CD4-positive, alpha-beta T cell (primary cell): ENCODE measurements at regions of chr3 and their contacts with region 1.

Region 1: DNA sequence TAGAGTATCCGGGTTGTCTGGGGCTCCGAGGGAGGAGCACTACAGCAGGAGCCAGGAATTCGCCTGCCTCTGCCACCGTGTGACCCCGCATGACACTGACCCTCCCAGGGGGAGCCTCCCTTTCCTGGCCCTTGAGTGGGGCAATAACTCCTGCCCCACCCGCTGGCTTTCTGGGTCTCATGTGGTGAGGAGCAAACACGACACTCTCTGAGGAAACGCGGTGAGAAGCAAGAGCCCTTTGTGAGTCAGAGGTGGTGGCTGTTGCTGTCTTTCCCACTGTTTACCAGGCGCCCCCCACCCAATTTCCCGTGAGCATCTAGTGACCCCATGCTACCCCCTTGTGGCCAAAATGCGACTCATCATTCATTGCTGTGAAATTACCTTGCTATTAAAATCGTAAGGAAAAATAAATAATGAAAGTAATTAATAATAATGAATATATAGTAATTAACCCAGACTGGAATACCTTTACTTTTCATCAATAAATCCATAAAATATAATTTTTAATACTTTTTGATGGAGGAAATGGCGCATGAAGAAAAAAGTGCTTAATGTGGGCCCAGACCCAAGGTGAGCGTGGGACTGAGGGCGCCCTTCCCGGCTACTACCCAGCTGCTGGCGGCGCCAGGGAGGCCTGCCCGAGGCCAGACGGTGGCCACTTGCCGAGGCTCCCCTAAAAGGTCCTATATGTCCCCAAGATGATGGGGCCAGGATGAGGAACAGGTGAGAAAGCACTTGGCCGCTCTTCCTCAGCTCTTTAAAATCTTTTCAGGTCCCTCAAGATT is 29.3 kb downstream of the CCNL1 start:
- DNase-seq: peak; percentile 57 to 94 (median 80)
- ATAC-seq: peak; percentile 69
- H3K4me3 ChIP-seq: peak overlapping the region; percentile 28
- H3K4me3 Mint-ChIP-seq: peak overlapping the region; percentile 80
- H3K27ac ChIP-seq: peak overlapping the region; percentile 80 to 92
- H3K27ac Mint-ChIP-seq: peak overlapping the region; percentile 98
- H3K4me1 ChIP-seq: peaks cover 80% of the 10 kb centered on the region
- H3K4me1 Mint-ChIP-seq: peaks cover 59% of the 10 kb centered on the region
- H3K27me3 ChIP-seq: no peaks in the 10 kb centered on the region
- H3K27me3 Mint-ChIP-seq: no peaks in the 10 kb centered on the region
- CTCF ChIP-seq: peak; percentile 87

Region 2: GRCh38 chr3:156519758-156520162 is 610.9 kb before region 1 on chr3:
- CTCF ChIA-PET with region 1: no interaction called
- POLR2A ChIA-PET with region 1: no interaction called
- intact Hi-C with region 1: loop called in 1 of 2 experiments (anchors 5 kb)
- DNase-seq: no peak
- ATAC-seq: no peak
- H3K4me3 ChIP-seq: no peak overlapping the region
- H3K4me3 Mint-ChIP-seq: no peak overlapping the region
- H3K27ac ChIP-seq: no peak overlapping the region
- H3K27ac Mint-ChIP-seq: no peak overlapping the region
- H3K4me1 ChIP-seq: peaks cover 6% of the 10 kb centered on the region
- H3K4me1 Mint-ChIP-seq: peaks cover 11% of the 10 kb centered on the region
- H3K27me3 ChIP-seq: peaks cover 0 to 7% of the 10 kb centered on the region in 2 experiments
- H3K27me3 Mint-ChIP-seq: peaks cover 57% of the 10 kb centered on the region
- CTCF ChIP-seq: no peak

Region 3: GRCh38 chr3:156816800-156817645 is 313.6 kb before region 1 on chr3:
- CTCF ChIA-PET with region 1: interaction called, 3 read pairs
- POLR2A ChIA-PET with region 1: interaction called, 8 read pairs
- intact Hi-C with region 1: loop called (anchors 5 kb)
- DNase-seq: peak; percentile 66 to 97 (median 84)
- ATAC-seq: peak; percentile 81
- H3K4me3 ChIP-seq: peak overlapping the region; percentile 74
- H3K4me3 Mint-ChIP-seq: peak overlapping the region; percentile 93
- H3K27ac ChIP-seq: peak overlapping the region; percentile 65 to 74
- H3K27ac Mint-ChIP-seq: peak overlapping the region; percentile 89
- H3K4me1 ChIP-seq: peaks cover 24% of the 10 kb centered on the region
- H3K4me1 Mint-ChIP-seq: peaks cover 38% of the 10 kb centered on the region
- H3K27me3 ChIP-seq: no peaks in the 10 kb centered on the region
- H3K27me3 Mint-ChIP-seq: no peaks in the 10 kb centered on the region
- CTCF ChIP-seq: no peak

Region 4: GRCh38 chr3:156826144-156826895 is 304.3 kb before region 1 on chr3 and contains the start of gene LEKR1:
- CTCF ChIA-PET with region 1: no interaction called
- POLR2A ChIA-PET with region 1: no interaction called
- intact Hi-C with region 1: loop called in 1 of 2 experiments (anchors 5 kb)
- DNase-seq: peak; percentile 22 to 90 (median 54)
- ATAC-seq: peak; percentile 54
- H3K4me3 ChIP-seq: peak within 1 kb of the TSS; percentile 87
- H3K4me3 Mint-ChIP-seq: peak within 1 kb of the TSS; percentile 95
- H3K27ac ChIP-seq: peak within 1 kb of the TSS; percentile 73 to 79
- H3K27ac Mint-ChIP-seq: peak within 1 kb of the TSS; percentile 93
- H3K4me1 ChIP-seq: peaks cover 15% of the 10 kb centered on the region
- H3K4me1 Mint-ChIP-seq: peaks cover 16% of the 10 kb centered on the region
- H3K27me3 ChIP-seq: no peaks in the 10 kb centered on the region
- H3K27me3 Mint-ChIP-seq: no peaks in the 10 kb centered on the region
- CTCF ChIP-seq: no peak
- total RNA-seq, gene LEKR1: 0.77 to 1.0 TPM

Region 5: DNA sequence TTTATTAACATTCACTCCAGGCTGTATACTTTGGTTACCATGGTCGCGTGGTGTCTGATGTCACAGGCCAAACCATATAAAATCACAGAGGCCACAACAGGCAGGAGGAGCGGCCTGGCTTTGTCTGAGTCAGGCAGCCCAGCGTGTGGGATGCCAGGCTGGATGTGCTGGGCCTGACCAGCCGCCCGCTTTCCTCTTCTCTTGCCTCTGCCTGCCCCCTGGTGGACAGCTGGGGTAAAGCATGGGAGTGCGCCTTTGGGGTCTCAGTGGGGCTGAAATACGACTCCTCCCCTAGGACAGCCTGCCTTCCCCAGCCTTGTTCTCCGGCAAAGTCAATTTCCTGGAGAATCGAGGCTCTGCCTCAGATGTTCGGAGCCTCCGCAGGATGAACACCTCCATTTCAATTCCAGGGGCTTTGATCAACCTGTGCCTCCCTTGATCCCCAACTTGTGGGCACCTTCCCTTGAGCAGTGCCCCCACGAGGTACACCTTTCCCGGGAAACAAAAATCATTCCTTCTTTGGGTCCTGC is 48.9 kb before region 1 on chr3:
- CTCF ChIA-PET with region 1: interaction called, 24 read pairs
- POLR2A ChIA-PET with region 1: interaction called, 3 read pairs
- intact Hi-C with region 1: loop called in 1 of 2 experiments (anchors 1 kb)
- DNase-seq: peak; percentile 76 to 93 (median 81)
- ATAC-seq: peak; percentile 93
- H3K4me3 ChIP-seq: no peak overlapping the region
- H3K4me3 Mint-ChIP-seq: no peak overlapping the region
- H3K27ac ChIP-seq: peak overlapping the region in 1 of 2 donors; percentile 25
- H3K27ac Mint-ChIP-seq: peak overlapping the region; percentile 64
- H3K4me1 ChIP-seq: peaks cover 14% of the 10 kb centered on the region
- H3K4me1 Mint-ChIP-seq: peaks cover 17% of the 10 kb centered on the region
- H3K27me3 ChIP-seq: no peaks in the 10 kb centered on the region
- H3K27me3 Mint-ChIP-seq: no peaks in the 10 kb centered on the region
- CTCF ChIP-seq: peak; percentile 98

Region 6: DNA sequence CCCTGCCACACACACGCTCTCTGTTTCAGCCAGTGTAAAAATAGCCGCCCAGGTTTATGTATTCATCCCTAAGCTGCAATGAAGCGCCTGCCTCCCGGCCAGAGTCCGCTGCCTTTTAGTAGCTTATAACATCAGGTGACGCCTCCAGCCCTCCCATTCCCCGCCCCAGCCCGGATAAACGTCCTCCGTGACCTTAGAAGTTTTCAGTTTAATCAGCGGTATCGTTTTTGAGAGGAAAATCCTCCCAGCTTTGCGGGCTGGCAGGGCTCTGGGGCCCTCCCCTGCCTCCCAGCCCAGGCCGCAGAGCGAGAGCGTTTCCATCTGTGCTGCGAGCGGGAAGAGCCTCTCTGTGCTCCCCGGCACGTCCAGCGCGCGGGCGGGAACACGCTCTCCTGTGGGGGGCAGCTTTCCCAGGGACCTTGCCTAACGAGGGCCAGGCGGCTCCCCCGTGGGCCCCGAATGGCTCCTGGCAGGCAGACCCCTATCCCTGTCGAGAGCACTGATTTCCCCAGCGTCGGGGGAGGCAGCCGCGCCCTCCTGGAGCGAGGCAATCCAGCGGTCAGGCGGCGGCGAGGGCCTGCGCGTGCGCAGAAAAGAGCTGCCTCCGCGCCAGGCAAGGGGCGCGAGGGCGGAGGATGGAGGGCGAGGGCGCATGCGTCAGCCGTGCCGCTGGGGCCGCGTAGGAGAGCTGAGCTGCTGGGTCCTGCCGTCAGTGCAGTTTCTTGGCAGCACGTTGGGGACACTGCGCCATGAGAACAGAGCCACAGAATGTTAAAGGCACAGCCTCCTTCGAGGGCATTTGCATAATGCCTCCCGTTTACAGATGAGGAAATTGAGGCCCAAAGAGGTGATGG is 41.8 kb before region 1 on chr3:
- CTCF ChIA-PET with region 1: interaction called, 11 read pairs
- POLR2A ChIA-PET with region 1: interaction called, 42 read pairs
- intact Hi-C with region 1: loop called (anchors 1 to 2 kb)
- DNase-seq: peak; percentile 88 to 97 (median 92)
- ATAC-seq: peak; percentile 83
- H3K4me3 ChIP-seq: peak overlapping the region; percentile 71
- H3K4me3 Mint-ChIP-seq: peak overlapping the region; percentile 90
- H3K27ac ChIP-seq: peak overlapping the region; percentile 92 to 93
- H3K27ac Mint-ChIP-seq: peak overlapping the region; percentile 99
- H3K4me1 ChIP-seq: peaks cover 31% of the 10 kb centered on the region
- H3K4me1 Mint-ChIP-seq: peaks cover 20% of the 10 kb centered on the region
- H3K27me3 ChIP-seq: no peaks in the 10 kb centered on the region
- H3K27me3 Mint-ChIP-seq: no peaks in the 10 kb centered on the region
- CTCF ChIP-seq: peak; percentile 14

Region 7: GRCh38 chr3:157113832-157114505 is 16.7 kb before region 1 on chr3:
- CTCF ChIA-PET with region 1: interaction called, 10 read pairs
- POLR2A ChIA-PET with region 1: no interaction called
- intact Hi-C with region 1: loop called in 1 of 2 experiments (anchors 2 kb)
- DNase-seq: peak in 3 of 14 experiments; percentile 32 to 51 (median 44)
- ATAC-seq: peak; percentile 92
- H3K4me3 ChIP-seq: no peak overlapping the region
- H3K4me3 Mint-ChIP-seq: no peak overlapping the region
- H3K27ac ChIP-seq: no peak overlapping the region
- H3K27ac Mint-ChIP-seq: no peak overlapping the region
- H3K4me1 ChIP-seq: no peaks in the 10 kb centered on the region
- H3K4me1 Mint-ChIP-seq: no peaks in the 10 kb centered on the region
- H3K27me3 ChIP-seq: no peaks in the 10 kb centered on the region
- H3K27me3 Mint-ChIP-seq: no peaks in the 10 kb centered on the region
- CTCF ChIP-seq: no peak

Region 8: DNA sequence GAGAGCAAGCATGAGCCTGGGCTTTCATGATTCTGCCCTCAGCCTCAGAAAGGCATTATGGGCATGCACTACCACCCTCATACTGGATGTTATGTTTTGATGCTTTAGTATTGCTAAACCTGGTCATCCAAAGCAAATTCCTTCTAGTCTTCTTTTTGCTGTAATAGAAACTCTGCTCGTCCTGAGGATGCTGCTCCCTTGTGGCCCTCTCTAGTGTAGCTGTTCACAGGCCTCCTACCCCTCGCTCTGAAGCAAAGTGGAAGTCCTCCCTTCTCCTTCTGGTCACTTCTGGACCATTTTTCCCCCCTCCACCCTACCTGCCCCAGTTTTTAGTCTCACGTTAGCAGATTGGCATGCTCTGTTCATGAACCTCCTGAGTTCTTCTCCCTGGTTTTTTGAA is 52.2 kb after region 1 on chr3:
- CTCF ChIA-PET with region 1: no interaction called
- POLR2A ChIA-PET with region 1: no interaction called
- intact Hi-C with region 1: no loop called
- DNase-seq: no peak
- ATAC-seq: no peak
- H3K4me3 ChIP-seq: no peak overlapping the region
- H3K4me3 Mint-ChIP-seq: no peak overlapping the region
- H3K27ac ChIP-seq: no peak overlapping the region
- H3K27ac Mint-ChIP-seq: no peak overlapping the region
- H3K4me1 ChIP-seq: no peaks in the 10 kb centered on the region
- H3K4me1 Mint-ChIP-seq: peaks cover 17% of the 10 kb centered on the region
- H3K27me3 ChIP-seq: no peaks in the 10 kb centered on the region
- H3K27me3 Mint-ChIP-seq: no peaks in the 10 kb centered on the region
- CTCF ChIP-seq: no peak